Vagina (tissue), 2 donors: ENCODE measurements at regions of chr11 and their contacts with region 1.

Region 1: GRCh38 chr11:18395735-18396504 is 1.6 kb downstream of the LDHA start:
- DNase-seq: peak; percentile 98 to 99
- H3K4me3 ChIP-seq: peak overlapping the region; percentile 93 to 94
- H3K27ac ChIP-seq: peak overlapping the region; percentile 90
- H3K4me1 ChIP-seq: peaks cover 7% of the 10 kb centered on the region
- H3K27me3 ChIP-seq: no peaks in the 10 kb centered on the region
- CTCF ChIP-seq: no peak
- POLR2A ChIP-seq: peak in 1 of 2 donors; percentile 50

Region 2: GRCh38 chr11:18321980-18322711 is 73.8 kb before region 1 on chr11 and contains the starts of genes GTF2H1 and HPS5:
- intact Hi-C with region 1: loop called (anchors 2 kb)
- DNase-seq: peak; percentile 98
- H3K4me3 ChIP-seq: peak within 1 kb of the TSS; percentile 66 to 94
- H3K27ac ChIP-seq: peak within 1 kb of the TSS; percentile 97
- H3K4me1 ChIP-seq: peaks cover 54% of the 10 kb centered on the region
- H3K27me3 ChIP-seq: no peaks in the 10 kb centered on the region
- CTCF ChIP-seq: no peak
- POLR2A ChIP-seq: peak in 1 of 2 donors; percentile 74
- total RNA-seq, gene GTF2H1: 64.1 TPM
- total RNA-seq, gene HPS5: 17.4 TPM

Region 3: DNA sequence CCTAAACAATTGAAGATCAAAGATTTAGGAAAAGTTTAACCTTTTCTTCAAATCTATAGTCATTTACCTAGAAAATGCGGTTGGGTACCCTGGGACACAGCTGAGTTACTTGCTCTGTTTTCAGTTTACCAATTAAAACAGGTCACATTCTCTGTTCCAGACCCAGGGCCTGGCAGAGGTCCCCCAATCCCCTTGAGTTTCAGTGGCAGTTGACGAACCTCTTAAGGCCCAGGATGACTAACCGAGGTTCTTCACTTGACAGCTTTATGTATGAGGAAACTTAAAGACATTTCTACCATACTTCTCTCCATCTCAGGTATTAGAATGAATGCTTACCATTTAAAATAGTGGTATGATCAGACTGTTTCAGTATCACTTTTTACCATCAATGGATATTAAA is 76.1 kb after region 1 on chr11:
- intact Hi-C with region 1: no loop called
- DNase-seq: no peak
- H3K4me3 ChIP-seq: no peak overlapping the region
- H3K27ac ChIP-seq: no peak overlapping the region
- H3K4me1 ChIP-seq: no peaks in the 10 kb centered on the region
- H3K27me3 ChIP-seq: no peaks in the 10 kb centered on the region
- CTCF ChIP-seq: no peak
- POLR2A ChIP-seq: no peak